MCF 10A (cell line): ENCODE measurements at regions of chr3 and their contacts with region 1.

Region 1: GRCh38 chr3:73848173-73848906 is 223.6 kb upstream of the PDZRN3 start:
- DNase-seq: peak; percentile 22
- H3K4me3 Mint-ChIP-seq: no peak overlapping the region
- H3K27ac Mint-ChIP-seq: no peak overlapping the region
- H3K4me1 Mint-ChIP-seq: no peaks in the 10 kb centered on the region
- H3K27me3 Mint-ChIP-seq: peaks cover 25% of the 10 kb centered on the region
- CTCF ChIP-seq: peak; percentile 57

Region 2: DNA sequence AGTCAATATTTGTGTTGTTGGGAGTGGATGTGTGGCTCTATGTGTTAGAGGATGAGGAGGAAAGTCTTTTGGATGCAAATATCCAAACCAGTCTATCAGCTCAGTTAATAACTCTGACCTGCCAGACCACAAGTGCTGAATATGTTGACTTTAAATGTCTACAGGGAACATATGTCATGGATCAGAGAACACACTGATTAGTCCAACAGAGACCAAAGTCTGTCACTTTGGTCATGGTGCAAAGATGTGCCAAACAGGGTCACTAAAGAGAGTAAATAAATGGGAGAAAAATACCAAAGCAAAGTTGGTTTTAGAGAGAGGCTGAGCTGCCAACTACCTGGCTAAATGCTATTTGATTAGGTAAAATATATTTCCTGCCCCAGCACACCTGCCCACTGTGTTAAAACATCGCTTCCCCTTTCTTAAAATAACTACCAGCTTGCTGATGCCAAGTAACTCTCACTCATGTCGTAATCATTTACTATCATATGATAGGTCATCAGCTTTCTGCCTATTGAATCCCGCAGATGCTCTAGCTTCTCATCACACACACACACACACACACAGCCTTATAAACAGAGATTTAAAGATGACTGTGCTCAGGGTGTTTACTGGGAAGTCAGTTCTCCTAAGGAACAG is 396.9 kb before region 1 on chr3:
- CTCF ChIA-PET with region 1: interaction called, 5 read pairs
- POLR2A ChIA-PET with region 1: no interaction called
- intact Hi-C with region 1: loop called (anchors 1 kb)
- DNase-seq: no peak
- H3K4me3 Mint-ChIP-seq: no peak overlapping the region
- H3K27ac Mint-ChIP-seq: no peak overlapping the region
- H3K4me1 Mint-ChIP-seq: no peaks in the 10 kb centered on the region
- H3K27me3 Mint-ChIP-seq: no peaks in the 10 kb centered on the region
- CTCF ChIP-seq: no peak

Region 3: GRCh38 chr3:73614411-73614810 is 233.9 kb before region 1 on chr3:
- CTCF ChIA-PET with region 1: interaction called, 7 read pairs
- POLR2A ChIA-PET with region 1: no interaction called
- intact Hi-C with region 1: loop called (anchors 1 kb)
- DNase-seq: peak; percentile 63
- H3K4me3 Mint-ChIP-seq: no peak overlapping the region
- H3K27ac Mint-ChIP-seq: no peak overlapping the region
- H3K4me1 Mint-ChIP-seq: no peaks in the 10 kb centered on the region
- H3K27me3 Mint-ChIP-seq: peaks cover 10% of the 10 kb centered on the region
- CTCF ChIP-seq: no peak

Region 4: GRCh38 chr3:73789825-73790444 is 58.4 kb before region 1 on chr3:
- CTCF ChIA-PET with region 1: interaction called, 12 read pairs
- POLR2A ChIA-PET with region 1: no interaction called
- intact Hi-C with region 1: no loop called
- DNase-seq: no peak
- H3K4me3 Mint-ChIP-seq: no peak overlapping the region
- H3K27ac Mint-ChIP-seq: no peak overlapping the region
- H3K4me1 Mint-ChIP-seq: peaks cover 17% of the 10 kb centered on the region
- H3K27me3 Mint-ChIP-seq: no peaks in the 10 kb centered on the region
- CTCF ChIP-seq: no peak

Region 5: DNA sequence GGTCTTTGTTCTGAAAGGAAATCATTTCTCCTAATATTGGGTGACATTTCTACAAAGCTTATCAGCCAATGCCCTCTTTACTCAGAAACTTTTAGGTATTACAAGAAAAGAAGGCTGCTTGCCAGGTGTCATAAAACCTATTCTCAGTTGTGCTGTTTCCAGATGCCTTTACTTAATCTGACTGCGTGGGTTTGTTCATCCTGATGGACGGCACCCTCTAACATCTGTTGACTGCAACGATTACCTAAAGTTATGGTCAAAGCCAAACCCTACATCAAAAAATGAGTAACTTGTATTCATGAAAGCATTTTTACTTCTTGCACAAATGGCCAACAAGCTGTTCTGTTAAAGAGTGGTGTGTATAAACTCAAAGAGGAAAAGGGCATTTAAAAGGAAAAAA is 15.9 kb before region 1 on chr3:
- CTCF ChIA-PET with region 1: interaction called, 17 read pairs
- POLR2A ChIA-PET with region 1: no interaction called
- intact Hi-C with region 1: no loop called
- DNase-seq: no peak
- H3K4me3 Mint-ChIP-seq: no peak overlapping the region
- H3K27ac Mint-ChIP-seq: no peak overlapping the region
- H3K4me1 Mint-ChIP-seq: no peaks in the 10 kb centered on the region
- H3K27me3 Mint-ChIP-seq: no peaks in the 10 kb centered on the region
- CTCF ChIP-seq: no peak

Region 6: DNA sequence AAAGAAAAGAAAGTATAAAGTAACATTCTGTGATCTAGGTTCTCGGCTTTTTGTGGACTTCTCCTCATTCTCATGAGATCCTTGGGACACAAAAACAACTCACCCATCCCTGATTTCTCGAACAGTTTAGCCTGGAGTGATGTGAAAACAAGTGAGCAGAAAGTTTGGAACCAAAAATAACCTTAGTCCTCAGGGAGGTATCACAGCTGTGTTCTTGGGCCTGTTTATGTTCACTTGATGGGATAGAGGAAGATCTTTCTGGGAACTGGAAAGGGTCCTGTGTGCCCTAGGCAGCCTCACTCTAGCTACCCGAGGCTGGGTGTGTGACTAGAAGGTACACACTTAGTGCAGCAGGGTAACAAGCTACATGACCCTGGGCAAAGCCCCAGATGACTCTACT is 85.2 kb after region 1 on chr3:
- CTCF ChIA-PET with region 1: no interaction called
- POLR2A ChIA-PET with region 1: no interaction called
- intact Hi-C with region 1: no loop called
- DNase-seq: no peak
- H3K4me3 Mint-ChIP-seq: no peak overlapping the region
- H3K27ac Mint-ChIP-seq: no peak overlapping the region
- H3K4me1 Mint-ChIP-seq: no peaks in the 10 kb centered on the region
- H3K27me3 Mint-ChIP-seq: no peaks in the 10 kb centered on the region
- CTCF ChIP-seq: no peak